Dendritic cell treated with granulocyte-macrophage colony-stimulating factor and Interleukin-4, amounts not matched to agents 40 ng/mL and 50 ng/mL, for 4 days (primary cell): ENCODE measurements at regions of chr5 and their contacts with region 1.

Region 1: DNA sequence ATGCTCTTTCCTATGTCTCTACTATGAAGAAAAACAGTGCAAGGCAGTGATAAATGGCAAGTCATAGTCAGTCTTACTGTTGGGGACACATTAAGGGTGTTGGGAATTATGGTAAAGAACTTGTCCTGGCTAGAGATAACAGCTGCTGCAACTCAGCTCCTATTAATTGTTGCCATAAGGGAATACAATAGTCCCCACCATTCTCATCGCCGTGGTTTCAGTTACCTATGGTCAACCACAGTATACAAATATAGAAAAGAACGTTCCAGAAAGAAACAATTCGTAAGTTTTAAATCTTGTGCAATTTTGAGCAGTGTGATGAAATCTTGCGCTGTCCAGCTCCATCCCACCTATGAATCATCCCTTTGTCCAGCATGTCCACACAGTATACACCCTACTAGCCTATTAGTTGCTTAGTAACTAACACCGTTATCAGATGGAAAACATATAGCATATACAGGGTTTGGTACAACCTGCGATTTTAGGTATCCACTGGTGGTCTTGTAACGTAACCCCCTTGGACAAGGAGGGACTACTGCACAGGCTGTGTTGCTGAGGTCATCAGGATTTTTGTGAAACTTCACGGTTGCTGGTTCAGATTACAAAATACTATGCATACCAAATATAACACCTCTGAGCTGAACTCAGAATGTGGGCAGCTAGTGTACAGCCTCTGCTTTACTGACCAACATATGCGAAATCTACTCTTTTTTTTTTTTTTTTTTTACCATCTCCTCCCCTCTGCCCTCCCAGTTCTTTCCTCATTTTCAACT is 53.5 kb downstream of the ZFR start:
- H3K4me3 Mint-ChIP-seq: no peak overlapping the region
- H3K27ac Mint-ChIP-seq: no peak overlapping the region
- H3K4me1 Mint-ChIP-seq: peaks cover 23% of the 10 kb centered on the region
- H3K27me3 Mint-ChIP-seq: no peaks in the 10 kb centered on the region

Region 2: DNA sequence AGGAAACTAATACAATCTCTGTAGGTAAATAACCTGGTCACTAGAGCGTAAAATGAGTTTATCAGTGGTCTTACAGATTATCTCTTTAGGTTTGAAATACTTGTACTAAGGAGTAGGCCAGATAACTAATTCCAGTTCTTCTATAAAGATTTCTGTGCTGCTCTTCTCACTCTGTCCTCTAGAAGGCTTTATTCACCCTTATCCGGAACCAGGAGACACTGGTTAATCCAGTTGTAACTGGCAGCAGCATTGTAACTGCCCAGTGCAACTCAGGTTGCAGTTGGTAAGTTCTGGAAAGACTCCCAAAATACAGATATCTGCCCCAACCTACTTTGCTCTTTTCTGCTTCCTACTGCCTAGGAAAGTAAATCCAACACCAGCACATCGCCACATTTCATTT is 839.1 kb before region 1 on chr5:
- intact Hi-C with region 1: loop called (anchors 5 kb)
- H3K4me3 Mint-ChIP-seq: no peak overlapping the region
- H3K27ac Mint-ChIP-seq: no peak overlapping the region
- H3K4me1 Mint-ChIP-seq: no peaks in the 10 kb centered on the region
- H3K27me3 Mint-ChIP-seq: no peaks in the 10 kb centered on the region

Region 3: DNA sequence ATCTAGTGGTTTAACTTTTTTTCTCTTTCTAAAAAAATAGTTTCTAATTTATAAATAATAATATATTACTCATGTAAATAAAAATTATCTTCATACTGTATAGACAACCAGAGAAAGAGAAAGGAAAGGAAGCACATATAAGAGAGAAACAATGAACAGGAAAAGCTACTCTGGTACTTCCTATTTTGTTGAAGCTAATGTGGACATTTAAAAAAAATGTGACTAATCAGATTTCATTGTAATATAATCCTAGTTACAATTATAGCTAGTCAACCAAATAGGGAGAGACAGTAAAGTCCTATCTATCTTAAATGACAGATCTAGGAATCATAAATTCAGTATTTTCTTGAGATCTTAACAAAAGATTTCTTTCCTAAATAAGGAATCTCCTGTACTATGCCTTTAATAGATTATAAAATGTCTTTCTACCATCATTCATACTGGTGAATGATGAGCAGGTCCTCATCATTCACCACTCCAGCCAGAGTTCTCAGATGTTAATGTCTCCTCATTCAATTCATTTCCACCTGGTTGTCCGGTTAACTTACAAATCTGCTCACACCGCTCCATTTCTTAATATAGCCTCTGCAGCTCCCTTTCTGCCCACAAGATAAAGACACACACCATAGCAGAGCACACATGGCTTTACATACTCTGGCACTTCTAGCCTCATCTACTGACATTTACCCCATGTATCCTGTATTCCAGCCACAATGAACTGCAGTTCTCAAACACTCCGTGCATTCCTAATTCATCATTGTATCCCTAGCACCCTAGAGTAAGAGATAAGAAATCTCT is 22.7 kb after region 1 on chr5:
- intact Hi-C with region 1: loop called (anchors 2 kb)
- H3K4me3 Mint-ChIP-seq: no peak overlapping the region
- H3K27ac Mint-ChIP-seq: no peak overlapping the region
- H3K4me1 Mint-ChIP-seq: peaks cover 6% of the 10 kb centered on the region
- H3K27me3 Mint-ChIP-seq: no peaks in the 10 kb centered on the region